A549 (cell line): ENCODE measurements at regions of chr11 and their contacts with region 1.

Region 1: DNA sequence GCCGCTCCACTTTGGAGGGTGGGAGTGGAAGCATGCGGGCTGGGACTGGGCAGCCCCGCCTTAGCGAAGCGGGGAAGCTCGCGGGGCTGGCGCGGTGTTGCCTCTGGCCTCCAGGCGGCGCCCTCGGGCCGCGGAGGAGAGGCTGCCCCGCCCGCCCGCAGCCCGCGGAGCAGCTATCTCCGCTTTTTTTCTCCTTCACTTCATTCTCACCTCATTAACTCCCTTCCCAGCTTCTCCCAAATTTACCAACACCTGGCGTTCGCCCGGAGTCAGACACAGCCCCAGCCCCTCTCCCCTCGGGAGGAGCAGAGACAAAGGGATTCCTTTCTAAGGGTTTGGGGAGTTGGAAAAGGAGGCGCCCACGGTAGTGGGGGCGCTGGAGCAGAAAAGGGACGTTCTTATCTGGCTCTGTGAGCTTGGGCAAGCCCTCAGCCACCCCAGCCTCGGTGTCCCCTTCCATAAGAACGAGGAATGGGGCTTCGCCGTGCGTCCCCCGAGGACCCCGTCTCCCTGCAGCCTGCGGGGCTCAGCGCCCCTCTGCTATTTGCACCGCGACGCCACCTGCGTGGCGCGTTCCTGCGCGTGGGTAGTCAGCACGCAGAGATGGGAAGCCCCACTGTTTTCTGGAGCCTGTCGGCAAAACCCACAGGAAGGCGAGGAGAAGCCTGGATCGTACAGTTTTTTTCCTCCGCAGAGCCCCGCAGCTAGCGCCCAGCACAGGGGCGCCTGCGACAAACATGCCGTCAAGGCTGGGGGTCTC is 1.5 kb upstream of the WNT11 start:
- DNase-seq: peak; percentile 85 to 89
- ATAC-seq: peak; percentile 52 to 79
- H3K4me3 ChIP-seq: peak overlapping the region; percentile 60
- H3K27ac ChIP-seq: peak overlapping the region; percentile 70 to 85; a peak in 5 of 6 replicates
- H3K4me1 ChIP-seq: 0 out of 3 replicates have a peak, but pooled peaks cover 9% of the 10 kb centered on the region
- CTCF ChIP-seq: peak; percentile 99
- EP300 ChIP-seq: no peak
- POLR2A ChIP-seq: no peak
- RAD21 ChIP-seq: peak; percentile 79 to 95

Region 2: GRCh38 chr11:75896843-75897419 is 310.9 kb before region 1 on chr11:
- CTCF ChIA-PET with region 1: interaction called, 48 read pairs
- POLR2A ChIA-PET with region 1: no interaction called
- DNase-seq: peak; percentile 25 to 41
- ATAC-seq: peak; percentile 50; a peak in 4 of 6 replicates
- H3K4me3 ChIP-seq: no peak overlapping the region
- H3K27ac ChIP-seq: no peak overlapping the region
- H3K4me1 ChIP-seq: no peaks in the 10 kb centered on the region
- CTCF ChIP-seq: peak; percentile 81
- EP300 ChIP-seq: no peak
- POLR2A ChIP-seq: no peak
- RAD21 ChIP-seq: peak; percentile 87 to 91

Region 3: GRCh38 chr11:76235233-76236091 is 27.6 kb after region 1 on chr11:
- CTCF ChIA-PET with region 1: interaction called, 82 read pairs
- POLR2A ChIA-PET with region 1: interaction called, 11 read pairs
- DNase-seq: peak; percentile 92 to 98
- ATAC-seq: peak; percentile 75 to 87
- H3K4me3 ChIP-seq: peak overlapping the region; percentile 61
- H3K27ac ChIP-seq: peak overlapping the region; percentile 71 to 92
- H3K4me1 ChIP-seq: peaks cover 10% of the 10 kb centered on the region
- CTCF ChIP-seq: no peak
- EP300 ChIP-seq: no peak
- POLR2A ChIP-seq: peak; percentile 58
- RAD21 ChIP-seq: no peak

Region 4: GRCh38 chr11:76270387-76270786 is 62.6 kb after region 1 on chr11:
- CTCF ChIA-PET with region 1: interaction called, 11 read pairs
- POLR2A ChIA-PET with region 1: no interaction called
- DNase-seq: no peak
- ATAC-seq: no peak
- H3K4me3 ChIP-seq: no peak overlapping the region
- H3K27ac ChIP-seq: no peak overlapping the region
- H3K4me1 ChIP-seq: peaks cover 13% of the 10 kb centered on the region; the same call in 2 of the 3 replicates
- CTCF ChIP-seq: no peak
- EP300 ChIP-seq: no peak
- POLR2A ChIP-seq: no peak
- RAD21 ChIP-seq: no peak

Region 5: DNA sequence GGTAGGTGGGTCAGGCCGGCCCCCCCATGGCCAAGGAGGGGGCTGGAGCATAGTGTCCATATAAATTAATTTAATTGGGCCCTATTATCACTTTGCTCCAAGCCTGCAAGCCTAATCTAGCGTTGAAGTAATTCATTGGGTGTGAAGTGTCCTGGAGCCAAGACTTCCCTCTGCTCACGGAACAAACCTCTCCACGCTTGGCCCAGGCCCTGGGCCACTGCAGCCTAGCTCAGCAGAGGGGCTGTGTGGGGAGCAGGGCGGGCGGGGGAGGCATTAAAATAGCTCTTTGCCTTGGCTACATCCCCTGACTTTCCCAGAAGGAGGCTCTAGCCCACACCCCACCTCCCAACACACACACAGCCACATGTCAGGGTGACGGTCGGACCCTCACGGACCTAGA is 99.6 kb after region 1 on chr11:
- CTCF ChIA-PET with region 1: interaction called, 98 read pairs
- POLR2A ChIA-PET with region 1: no interaction called
- DNase-seq: no peak
- ATAC-seq: no peak
- H3K4me3 ChIP-seq: no peak overlapping the region
- H3K27ac ChIP-seq: no peak overlapping the region
- H3K4me1 ChIP-seq: no peaks in the 10 kb centered on the region
- CTCF ChIP-seq: no peak
- EP300 ChIP-seq: no peak
- POLR2A ChIP-seq: no peak
- RAD21 ChIP-seq: no peak

Region 6: DNA sequence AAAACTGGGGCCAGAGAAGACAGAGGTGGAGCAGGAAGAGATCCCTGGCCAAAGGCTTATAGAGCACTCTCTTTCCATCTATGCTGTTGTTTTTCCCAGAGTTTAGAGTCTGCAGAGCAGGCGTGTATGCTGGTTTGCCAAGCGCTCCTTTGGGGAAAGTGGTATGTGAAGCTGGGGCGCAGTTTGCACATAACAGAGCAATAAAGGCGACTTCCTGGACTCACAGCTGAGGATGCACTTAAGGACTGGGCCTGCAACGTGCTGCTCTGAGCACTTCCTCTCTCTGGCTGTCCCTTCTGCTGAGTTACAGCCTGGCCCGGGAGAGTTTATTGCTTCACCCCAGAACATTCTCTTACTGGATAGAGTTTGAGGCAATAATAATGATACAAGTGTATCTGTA is 131.4 kb after region 1 on chr11:
- CTCF ChIA-PET with region 1: interaction called, 11 read pairs
- POLR2A ChIA-PET with region 1: no interaction called
- DNase-seq: no peak
- ATAC-seq: peak in 1 of 2 experiments; percentile 26; a peak in 1 of 6 replicates
- H3K4me3 ChIP-seq: no peak overlapping the region
- H3K27ac ChIP-seq: no peak overlapping the region
- H3K4me1 ChIP-seq: no peaks in the 10 kb centered on the region
- CTCF ChIP-seq: no peak
- EP300 ChIP-seq: no peak
- POLR2A ChIP-seq: no peak
- RAD21 ChIP-seq: no peak